PC-3 (cell line): ENCODE measurements at regions of chr20 and their contacts with region 1.

Region 1: DNA sequence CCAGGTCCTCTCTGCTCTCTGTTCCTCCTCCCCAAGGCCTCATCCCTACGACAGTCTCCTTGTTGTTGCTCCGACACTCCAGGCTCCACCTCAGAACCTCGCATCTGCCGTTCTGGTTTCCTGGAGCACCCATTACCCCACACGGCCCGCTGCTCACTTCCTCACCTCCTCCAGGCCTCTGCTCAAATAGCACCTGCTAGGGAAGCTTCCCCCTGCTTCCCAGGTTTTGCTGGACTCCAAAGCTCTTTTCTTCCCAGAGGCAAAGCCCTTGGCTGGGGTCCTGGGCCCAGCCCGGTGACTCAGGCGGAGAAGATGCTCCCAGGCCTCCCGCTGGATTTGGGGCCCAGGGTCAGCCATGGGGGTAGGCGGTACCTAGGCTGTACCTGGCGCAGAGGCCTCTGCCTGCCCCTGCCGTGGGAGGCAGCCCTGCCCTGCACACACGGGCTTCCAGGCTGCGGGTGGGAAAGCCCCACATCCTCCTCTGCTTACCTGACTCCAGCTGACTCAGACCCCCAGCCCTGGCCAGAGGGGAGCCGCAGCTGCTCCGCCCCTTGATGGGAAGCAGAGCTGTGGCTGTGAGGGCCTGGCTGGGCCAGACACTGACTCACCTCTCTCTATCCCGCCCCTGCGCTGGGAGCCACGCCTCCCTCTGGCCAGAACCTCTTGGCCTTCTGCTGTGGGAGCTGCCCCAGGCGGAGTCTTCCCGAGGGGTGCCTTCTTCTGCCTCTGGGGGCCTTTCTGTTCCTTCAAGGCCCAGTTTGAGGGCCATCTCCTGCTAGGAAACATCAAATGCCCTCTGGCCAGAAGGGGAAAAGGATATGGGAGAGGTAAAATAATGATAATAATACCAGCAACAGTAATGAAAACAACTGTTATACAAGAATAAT is 130.5 kb downstream of the CEBPB start:
- DNase-seq: peak; percentile 98
- ATAC-seq: peak; percentile 98
- H3K4me3 ChIP-seq: peak overlapping the region; percentile 57
- H3K27ac ChIP-seq: peak overlapping the region; percentile 93
- H3K4me1 ChIP-seq: peaks cover 25% of the 10 kb centered on the region
- H3K27me3 ChIP-seq: no peaks in the 10 kb centered on the region
- CTCF ChIP-seq: no peak

Region 2: DNA sequence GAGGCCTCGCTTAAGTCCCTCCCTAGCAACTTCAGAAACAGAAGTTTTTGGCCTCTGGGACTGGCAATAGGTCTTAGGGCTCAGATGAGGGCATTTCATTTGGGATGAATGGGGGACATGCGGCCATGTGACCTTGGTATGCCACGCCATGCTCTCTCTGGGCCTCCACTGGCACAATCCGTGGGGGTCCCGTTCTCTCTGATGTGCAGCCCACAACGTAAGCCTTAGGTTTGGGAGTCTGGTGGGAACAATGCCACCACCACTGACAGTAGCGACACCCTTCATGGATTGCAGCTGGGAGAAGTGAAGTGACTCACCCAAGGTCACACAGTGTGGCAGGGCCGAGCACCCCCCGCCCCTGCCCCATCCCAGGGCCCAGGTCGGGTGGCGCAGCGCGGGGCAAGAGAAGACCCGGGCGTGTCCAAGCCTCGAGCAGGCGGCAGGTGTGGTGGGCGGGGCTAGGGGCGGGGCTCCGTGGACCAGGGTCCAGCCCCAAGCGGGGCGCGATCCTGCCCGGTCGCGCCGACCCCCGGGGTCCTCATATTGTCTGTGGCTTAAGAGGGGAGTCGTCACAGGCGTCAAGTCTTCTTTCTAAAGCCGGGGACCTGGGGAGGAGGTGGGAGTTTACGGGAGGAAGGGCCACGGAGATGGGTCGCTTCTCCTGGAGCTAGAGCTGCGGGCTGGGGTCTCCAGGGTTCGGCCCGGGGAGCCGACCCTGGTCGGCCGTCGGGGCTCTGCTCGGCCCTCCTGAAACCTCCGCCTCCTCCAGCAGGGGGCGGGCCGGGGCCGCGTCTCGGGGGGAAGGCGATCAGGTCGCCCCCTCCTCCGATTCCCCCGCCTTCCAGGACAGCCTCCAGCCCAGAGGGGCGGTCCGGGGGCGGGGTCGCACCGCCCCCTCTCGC is 131.2 kb before region 1 on chr20:
- CTCF ChIA-PET with region 1: interaction called, 3 read pairs
- POLR2A ChIA-PET with region 1: interaction called, 10 read pairs
- intact Hi-C with region 1: no loop called
- DNase-seq: peak; percentile 92
- ATAC-seq: peak; percentile 39
- H3K4me3 ChIP-seq: peak overlapping the region; percentile 96
- H3K27ac ChIP-seq: peak overlapping the region; percentile 75; the same call in 1 of the 2 replicates
- H3K4me1 ChIP-seq: peaks cover 28% of the 10 kb centered on the region
- H3K27me3 ChIP-seq: no peaks in the 10 kb centered on the region
- CTCF ChIP-seq: peak; percentile 72

Region 3: DNA sequence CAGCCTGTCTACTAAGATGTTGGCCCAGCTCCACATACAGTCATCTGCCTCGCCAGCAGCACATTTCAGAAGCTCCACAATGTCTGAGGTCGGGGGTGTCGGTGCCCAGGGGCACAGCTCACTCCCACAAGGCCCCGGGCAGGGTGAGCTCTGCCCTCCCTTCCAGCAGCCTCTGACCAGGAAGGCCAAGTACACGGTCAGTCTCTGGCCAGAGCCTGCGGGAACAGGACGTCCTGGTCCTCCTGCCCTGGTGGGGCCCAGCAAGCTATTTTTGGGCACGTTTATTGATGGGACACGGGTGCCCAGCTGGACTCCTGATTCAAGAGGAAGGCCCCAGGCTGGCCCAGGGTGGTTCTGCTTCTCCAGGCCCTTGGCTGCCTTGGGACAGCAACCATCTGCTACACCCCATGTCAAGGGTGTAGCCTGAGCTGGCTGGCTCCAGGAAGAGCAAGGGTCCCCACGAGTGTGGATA is 74.1 kb after region 1 on chr20:
- CTCF ChIA-PET with region 1: no interaction called
- POLR2A ChIA-PET with region 1: no interaction called
- intact Hi-C with region 1: no loop called
- DNase-seq: peak; percentile 37
- ATAC-seq: no peak; the same call in 1 of the 2 replicates
- H3K4me3 ChIP-seq: no peak overlapping the region
- H3K27ac ChIP-seq: no peak overlapping the region
- H3K4me1 ChIP-seq: peaks cover 22% of the 10 kb centered on the region
- H3K27me3 ChIP-seq: no peaks in the 10 kb centered on the region
- CTCF ChIP-seq: no peak

Region 4: DNA sequence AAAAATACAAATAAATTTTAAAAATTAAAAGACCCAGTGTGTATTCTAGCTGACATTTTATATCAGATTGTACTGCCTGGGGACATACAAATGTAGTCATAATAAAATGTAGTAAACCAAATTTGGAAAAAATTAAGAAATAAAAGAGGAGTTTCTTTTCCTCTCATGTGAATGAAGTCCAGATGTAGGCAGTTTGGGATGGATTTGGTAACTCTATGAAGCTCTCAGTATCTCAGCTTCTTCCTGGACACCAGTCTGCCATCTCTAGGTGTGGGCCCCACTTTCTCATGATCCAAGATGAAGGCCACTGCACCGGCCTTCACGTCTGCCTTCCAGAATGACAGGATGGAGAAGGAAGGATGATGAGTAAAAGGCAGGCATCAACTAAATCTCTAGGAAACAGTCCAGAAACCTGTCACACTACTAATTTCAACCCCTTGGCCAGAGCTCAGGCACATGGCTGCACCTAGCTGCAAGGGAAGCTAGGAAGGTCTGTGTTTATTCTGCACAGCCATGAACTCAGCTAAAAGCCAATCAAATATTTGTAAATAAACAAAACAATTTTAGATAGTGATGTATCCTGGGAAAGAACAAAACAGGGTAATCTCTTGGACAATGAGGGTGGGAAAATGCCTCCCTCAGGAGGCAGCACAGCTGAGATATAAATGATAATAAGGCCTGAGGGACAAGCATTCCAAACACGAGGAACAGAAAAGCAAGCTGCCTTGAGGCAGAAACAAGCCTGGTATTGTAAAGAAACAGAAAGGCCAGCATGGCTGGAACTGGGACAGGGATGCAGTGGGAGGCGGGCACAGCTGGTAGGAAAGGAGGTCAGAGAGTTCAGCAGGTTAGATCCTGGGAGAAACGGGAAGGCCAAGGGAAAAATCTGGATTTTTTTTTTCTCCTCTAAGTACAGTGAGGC is 100.5 kb after region 1 on chr20:
- CTCF ChIA-PET with region 1: no interaction called
- POLR2A ChIA-PET with region 1: no interaction called
- intact Hi-C with region 1: loop called (anchors 5 kb)
- DNase-seq: no peak
- ATAC-seq: no peak
- H3K4me3 ChIP-seq: no peak overlapping the region
- H3K27ac ChIP-seq: peak overlapping the region; percentile 96
- H3K4me1 ChIP-seq: peaks cover 34% of the 10 kb centered on the region
- H3K27me3 ChIP-seq: no peaks in the 10 kb centered on the region
- CTCF ChIP-seq: no peak